Heart right ventricle (tissue), 16 donors: ENCODE measurements at regions of chr11 and their contacts with region 1.

Region 1: DNA sequence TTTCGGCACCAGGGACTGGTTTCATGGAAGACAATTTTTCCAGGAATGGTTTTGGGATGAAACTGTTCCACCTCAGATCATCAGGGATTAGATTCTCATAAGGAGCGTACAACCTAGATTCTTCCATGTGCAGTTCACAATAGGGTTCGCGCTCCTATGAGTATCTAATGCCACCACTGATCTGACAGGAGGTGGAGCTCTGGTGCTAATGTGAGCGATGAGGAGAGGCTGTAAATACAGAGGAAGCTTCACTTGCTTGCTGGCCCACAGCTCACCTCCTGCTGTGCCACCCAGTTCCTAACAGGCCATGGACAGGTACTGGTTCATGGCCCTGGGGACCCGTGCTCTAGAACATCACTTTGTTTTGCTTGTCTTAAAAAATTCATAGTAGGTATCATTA is 41.8 kb upstream of the AMPD3 start:
- DNase-seq: peak in 1 of 2 donors; percentile 36
- ATAC-seq: peak in 5 of 8 donors; percentile 38 to 61 (median 58)
- H3K4me3 ChIP-seq: no peak overlapping the region
- H3K27ac ChIP-seq: peak overlapping the region in 1 of 10 donors; percentile 77
- H3K4me1 ChIP-seq: peaks cover 0 to 27% (median 4%) of the 10 kb centered on the region in 9 donors
- H3K27me3 ChIP-seq: no peaks in the 10 kb centered on the region
- CTCF ChIP-seq: peak in 6 of 9 donors; percentile 10 to 48 (median 25)

Region 2: DNA sequence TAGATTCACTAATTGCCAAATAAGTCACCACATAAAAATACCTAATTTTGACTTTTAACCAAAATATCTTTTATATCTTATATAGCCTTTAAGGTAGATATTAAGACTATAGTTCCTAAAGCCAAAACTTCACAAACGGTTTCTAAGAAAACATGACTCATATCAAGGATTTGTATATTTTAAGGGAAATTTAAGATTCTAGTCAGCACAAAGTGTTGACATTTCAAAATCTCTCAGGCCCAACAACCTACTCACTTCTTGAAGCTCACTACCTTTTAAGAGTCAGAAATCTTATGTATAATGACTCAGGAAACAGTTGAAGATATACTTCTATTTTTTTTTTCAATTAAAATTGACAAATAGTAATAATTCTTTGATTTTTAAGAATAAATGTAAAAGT is 341.1 kb before region 1 on chr11:
- intact Hi-C with region 1: no loop called
- DNase-seq: no peak
- ATAC-seq: no peak
- H3K4me3 ChIP-seq: no peak overlapping the region
- H3K27ac ChIP-seq: no peak overlapping the region
- H3K4me1 ChIP-seq: peaks cover 0 to 12% (median 8%) of the 10 kb centered on the region in 9 donors
- H3K27me3 ChIP-seq: no peaks in the 10 kb centered on the region
- CTCF ChIP-seq: no peak

Region 3: GRCh38 chr11:10314199-10315072 is 98.8 kb before region 1 on chr11:
- intact Hi-C with region 1: no loop called
- DNase-seq: peak in 1 of 2 donors; percentile 26
- ATAC-seq: peak in 5 of 8 donors; percentile 60 to 68 (median 64)
- H3K4me3 ChIP-seq: no peak overlapping the region
- H3K27ac ChIP-seq: no peak overlapping the region
- H3K4me1 ChIP-seq: peaks cover 0 to 27% (median 16%) of the 10 kb centered on the region in 9 donors
- H3K27me3 ChIP-seq: no peaks in the 10 kb centered on the region
- CTCF ChIP-seq: no peak

Region 4: GRCh38 chr11:10730151-10730550 is 316.9 kb after region 1 on chr11:
- intact Hi-C with region 1: loop called in 2 of 10 experiments (anchors 5 kb)
- DNase-seq: no peak
- ATAC-seq: no peak
- H3K4me3 ChIP-seq: no peak overlapping the region
- H3K27ac ChIP-seq: no peak overlapping the region
- H3K4me1 ChIP-seq: peaks cover 0 to 16% (median 0%) of the 10 kb centered on the region in 9 donors
- H3K27me3 ChIP-seq: peaks cover 0 to 19% (median 0%) of the 10 kb centered on the region in 7 donors
- CTCF ChIP-seq: no peak